Activated T-helper 1 cell treated with anti-CD3 and anti-CD28 coated beads, Interleukin-12 subunit alpha, Interleukin-12 subunit beta, Interleukin-2, Interleukin-4 antibody, amounts not matched to agents 30 ng/mL and 10 ng/mL and 1 ng/mL, durations not matched to agents 14 hours and 24 hours and 36 hours (primary cell): ENCODE measurements at regions of chr2 and their contacts with region 1.

Region 1: DNA sequence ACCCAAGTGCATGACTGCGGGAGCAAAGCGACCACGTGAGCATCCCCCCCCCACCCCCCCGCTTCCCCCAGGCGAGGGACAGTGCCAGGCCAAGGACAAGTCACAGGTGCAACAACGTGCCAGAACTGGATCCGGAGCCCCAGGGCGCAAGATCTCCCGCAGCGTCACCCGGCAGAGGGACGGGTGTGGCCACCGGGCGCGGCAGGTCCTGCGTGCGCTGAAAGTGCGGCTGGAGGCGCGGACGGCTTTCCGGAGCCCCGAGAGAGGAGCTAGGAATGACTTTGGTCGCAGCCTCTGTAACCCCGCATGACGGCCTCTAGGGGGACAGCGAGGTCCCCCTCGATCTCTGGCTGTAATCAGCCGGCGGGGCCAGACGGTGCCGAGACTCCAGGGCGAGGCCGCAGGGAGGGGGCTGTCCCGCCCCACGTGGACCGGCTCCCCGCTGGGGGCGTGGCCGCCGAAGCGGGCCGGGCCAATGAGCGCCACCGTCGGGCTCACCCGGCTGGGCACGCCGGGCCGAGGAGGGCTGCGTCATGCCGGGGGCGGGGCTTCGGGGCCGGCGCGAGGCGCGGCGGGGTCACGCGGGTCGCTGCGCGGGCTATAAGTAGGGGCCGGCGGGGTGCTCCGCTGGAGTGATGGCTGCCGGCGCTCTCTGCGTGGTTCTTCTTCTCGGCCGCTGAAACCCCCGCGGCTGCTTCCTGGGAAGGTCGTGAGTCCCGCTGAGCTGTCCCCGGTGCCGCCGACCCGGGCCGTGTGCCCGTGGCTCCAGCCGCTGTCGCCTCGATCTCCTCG is at the start of gene SLC20A1:
- DNase-seq: peak; percentile 99
- H3K4me3 Mint-ChIP-seq: peak within 1 kb of the TSS; percentile 98
- H3K27ac Mint-ChIP-seq: peak within 1 kb of the TSS; percentile 92
- H3K4me1 Mint-ChIP-seq: peaks cover 72% of the 10 kb centered on the region
- H3K27me3 Mint-ChIP-seq: no peaks in the 10 kb centered on the region
- total RNA-seq, gene SLC20A1: 164 and 172 TPM in 2 replicates

Region 2: DNA sequence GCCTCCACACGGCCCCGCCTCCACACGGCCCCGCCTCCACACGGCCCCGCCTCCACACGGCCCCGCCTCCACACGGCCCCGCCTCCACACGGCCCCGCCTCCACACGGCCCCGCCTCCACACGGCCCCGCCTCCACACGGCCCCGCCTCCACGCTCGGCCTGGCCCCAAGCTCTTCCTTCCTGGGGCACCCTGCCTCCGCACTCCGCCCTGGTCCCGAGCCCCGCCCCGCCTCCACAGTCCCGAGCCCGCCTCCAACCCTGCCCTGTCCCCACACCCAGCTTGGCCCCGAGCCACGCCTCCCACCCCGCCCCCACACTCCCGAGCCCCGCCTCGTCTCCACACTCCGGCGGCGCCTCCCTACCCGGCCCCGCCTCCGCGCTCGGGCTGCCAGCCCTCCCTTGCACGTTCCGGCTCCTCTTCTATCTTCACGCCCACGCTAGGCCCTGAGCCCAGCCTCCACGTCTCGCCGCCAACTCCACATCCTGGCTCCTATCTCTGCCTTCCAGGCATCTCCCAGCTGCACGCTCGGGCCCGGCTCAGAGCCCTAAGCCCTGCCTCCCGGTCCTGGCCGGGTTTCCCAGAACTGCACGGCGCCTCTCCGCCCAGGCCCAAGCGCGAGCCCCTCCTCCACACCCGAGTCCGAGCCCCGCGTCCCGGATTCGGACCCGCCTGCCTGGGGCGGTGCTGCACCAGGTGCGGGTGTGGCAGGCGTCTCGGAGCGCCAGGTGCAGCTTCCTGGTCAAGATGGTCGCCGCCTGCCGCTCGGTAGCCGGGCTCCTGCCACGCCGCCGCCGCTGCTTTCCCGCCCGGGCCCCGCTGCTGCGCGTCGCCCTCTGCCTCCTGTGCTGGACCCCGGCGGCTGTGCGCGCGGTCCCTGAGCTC is 590.4 kb before region 1 on chr2 and contains the start of gene TMEM87B:
- intact Hi-C with region 1: loop called (anchors 10 kb)
- DNase-seq: peak; percentile 95
- H3K4me3 Mint-ChIP-seq: peak within 1 kb of the TSS; percentile 93
- H3K27ac Mint-ChIP-seq: peak within 1 kb of the TSS; percentile 98
- H3K4me1 Mint-ChIP-seq: peaks cover 43% of the 10 kb centered on the region
- H3K27me3 Mint-ChIP-seq: peaks cover 2% of the 10 kb centered on the region
- total RNA-seq, gene TMEM87B: 15.0 and 16.6 TPM in 2 replicates

Region 3: DNA sequence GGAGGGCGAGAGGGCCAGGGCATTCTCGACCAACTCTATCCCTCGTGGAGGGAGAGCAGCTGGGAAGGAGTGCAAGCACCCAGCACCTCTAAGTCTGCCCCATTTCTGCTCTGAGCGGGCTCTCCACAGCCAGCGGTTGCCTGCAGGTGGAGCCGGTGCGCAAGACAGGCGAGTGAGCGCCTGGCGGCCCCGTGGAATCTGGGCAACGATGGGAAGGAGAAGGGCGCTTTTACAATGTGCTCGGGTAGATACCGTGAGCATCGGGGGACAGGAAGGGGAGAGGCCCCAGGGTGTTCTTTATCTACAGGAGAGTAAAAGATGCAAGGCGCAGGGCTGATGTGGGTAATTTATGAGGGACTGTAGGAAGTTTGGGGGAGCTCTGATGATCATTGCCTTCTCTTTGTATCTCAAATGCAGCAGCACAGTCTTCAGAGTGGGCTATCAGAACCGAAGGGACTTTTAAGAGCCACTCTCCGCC is 164.4 kb before region 1 on chr2:
- intact Hi-C with region 1: loop called (anchors 1 kb)
- DNase-seq: peak; percentile 79
- H3K4me3 Mint-ChIP-seq: peak overlapping the region; percentile 87
- H3K27ac Mint-ChIP-seq: peak overlapping the region; percentile 96
- H3K4me1 Mint-ChIP-seq: peaks cover 40% of the 10 kb centered on the region
- H3K27me3 Mint-ChIP-seq: peaks cover 4% of the 10 kb centered on the region

Region 4: DNA sequence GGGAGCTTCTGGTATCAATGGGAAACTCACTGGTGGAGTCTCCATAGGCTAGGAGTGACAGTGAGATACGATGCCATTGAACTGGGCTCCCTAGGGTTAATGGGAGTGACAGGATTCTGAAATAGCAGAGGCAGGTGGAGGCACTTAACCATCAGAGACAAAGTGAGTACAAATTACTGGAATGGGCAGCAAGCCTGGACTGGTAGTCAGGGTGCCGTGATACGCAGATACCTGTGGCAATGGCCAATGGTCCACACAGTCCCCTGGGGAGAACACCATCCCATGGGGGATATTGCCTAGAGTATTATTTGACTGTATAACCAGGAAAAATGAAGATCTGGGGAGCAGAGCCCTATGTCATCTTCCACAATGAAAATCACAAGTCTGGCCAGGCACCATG is 43.8 kb before region 1 on chr2:
- intact Hi-C with region 1: loop called (anchors 1 kb)
- DNase-seq: no peak
- H3K4me3 Mint-ChIP-seq: no peak overlapping the region
- H3K27ac Mint-ChIP-seq: no peak overlapping the region
- H3K4me1 Mint-ChIP-seq: peaks cover 10% of the 10 kb centered on the region
- H3K27me3 Mint-ChIP-seq: no peaks in the 10 kb centered on the region

Region 5: DNA sequence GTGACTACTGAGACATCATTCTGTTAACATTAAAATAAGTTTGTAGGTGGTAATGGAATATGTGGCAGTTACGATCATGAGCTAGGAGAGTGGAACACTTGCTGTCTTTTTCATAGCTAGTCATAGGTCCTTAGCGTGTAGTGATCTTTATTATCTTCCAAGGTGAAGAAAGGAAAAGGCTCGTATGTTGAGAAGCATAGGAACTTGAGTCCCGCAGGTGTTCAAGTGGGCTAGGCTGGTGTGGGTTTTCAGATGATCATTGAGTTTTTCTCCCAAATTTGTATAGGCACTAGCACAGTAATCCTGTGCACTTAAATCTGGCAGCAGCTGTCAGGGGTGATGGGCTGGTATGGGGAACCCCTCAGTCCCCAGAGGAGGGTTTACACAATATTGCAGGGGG is 11.2 kb after region 1 on chr2:
- intact Hi-C with region 1: loop called (anchors 1 kb)
- DNase-seq: no peak
- H3K4me3 Mint-ChIP-seq: no peak overlapping the region
- H3K27ac Mint-ChIP-seq: no peak overlapping the region
- H3K4me1 Mint-ChIP-seq: peaks cover 81% of the 10 kb centered on the region
- H3K27me3 Mint-ChIP-seq: no peaks in the 10 kb centered on the region

Region 6: DNA sequence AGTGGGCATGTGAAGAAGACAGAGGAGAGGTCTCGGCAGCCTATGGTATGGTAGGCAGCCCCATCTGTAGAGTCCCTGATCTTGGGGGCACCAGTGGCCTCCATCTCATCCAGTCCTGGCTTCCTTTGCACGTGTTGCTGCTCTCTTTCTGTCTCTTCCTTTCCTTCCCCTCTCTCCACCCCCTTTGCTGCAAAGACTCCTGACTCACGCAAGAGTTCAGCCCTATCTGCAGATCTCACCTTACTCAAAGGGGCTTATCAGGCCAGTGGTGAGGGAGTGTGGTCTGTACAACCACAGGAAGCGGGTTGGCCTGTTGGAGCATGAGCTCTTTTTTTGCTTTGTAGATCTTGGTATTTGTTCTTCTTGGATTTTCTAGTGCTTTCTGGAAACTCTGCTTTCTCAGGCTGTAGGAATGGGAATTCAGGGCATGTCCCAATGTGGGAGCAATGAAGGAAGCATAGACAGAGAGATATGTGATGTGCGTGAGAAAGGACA is 60.7 kb after region 1 on chr2:
- intact Hi-C with region 1: loop called (anchors 1 kb)
- DNase-seq: peak; percentile 79
- H3K4me3 Mint-ChIP-seq: peak overlapping the region; percentile 79
- H3K27ac Mint-ChIP-seq: peak overlapping the region; percentile 93
- H3K4me1 Mint-ChIP-seq: peaks cover 72% of the 10 kb centered on the region
- H3K27me3 Mint-ChIP-seq: no peaks in the 10 kb centered on the region

Region 7: GRCh38 chr2:112764071-112765044 is 118.9 kb after region 1 on chr2 and contains the start of gene CKAP2L:
- intact Hi-C with region 1: loop called (anchors 1 kb)
- DNase-seq: peak; percentile 95
- H3K4me3 Mint-ChIP-seq: peak within 1 kb of the TSS; percentile 95
- H3K27ac Mint-ChIP-seq: peak within 1 kb of the TSS; percentile 93
- H3K4me1 Mint-ChIP-seq: peaks cover 50% of the 10 kb centered on the region
- H3K27me3 Mint-ChIP-seq: no peaks in the 10 kb centered on the region
- total RNA-seq, gene CKAP2L: 20.9 and 21.2 TPM in 2 replicates